H1 (cell line): ENCODE measurements at regions of chr7 and their contacts with region 1.

Region 1: DNA sequence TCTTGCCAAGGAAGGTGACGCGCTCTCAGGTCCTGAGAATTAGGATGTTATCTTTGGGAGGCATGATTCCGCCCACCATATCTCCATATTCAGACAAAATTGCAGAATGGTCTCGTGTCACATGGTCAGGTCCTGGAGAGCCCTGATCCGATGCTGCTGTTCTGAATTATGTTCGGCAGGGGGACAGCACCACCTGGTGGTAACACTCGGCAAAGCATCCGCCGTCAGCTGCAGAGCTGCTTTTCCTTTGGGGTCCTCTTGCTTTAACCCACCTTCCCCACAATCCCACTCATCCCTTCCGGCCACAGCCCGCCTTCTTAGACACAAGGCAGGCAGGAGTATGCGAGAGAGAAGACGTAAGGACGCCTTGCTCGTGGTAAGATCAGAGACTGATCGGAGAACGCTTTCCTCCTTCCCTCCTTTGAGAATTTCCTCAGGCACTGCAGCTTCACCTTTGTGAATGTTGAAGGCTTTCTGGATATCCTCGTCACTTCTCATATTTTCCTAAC is 327.8 kb upstream of the C7orf33 start:
- DNase-seq: peak; percentile 64 to 98
- H3K4me3 ChIP-seq: no peak overlapping the region
- H3K27ac ChIP-seq: no peak overlapping the region
- H3K4me1 ChIP-seq: peaks cover 0 to 3% (median 0%) of the 10 kb centered on the region in 4 experiments; a peak in 1 of 7 replicates
- H3K27me3 ChIP-seq: no peaks in the 10 kb centered on the region
- CTCF ChIP-seq: peak; percentile 85 to 97 (median 97)
- EP300 ChIP-seq: no peak
- POLR2A ChIP-seq: no peak
- RAD21 ChIP-seq: peak; percentile 93

Region 2: GRCh38 chr7:148276314-148277041 is 13.7 kb after region 1 on chr7:
- CTCF ChIA-PET with region 1: interaction called, 28 read pairs
- POLR2A ChIA-PET with region 1: no interaction called
- DNase-seq: no peak
- H3K4me3 ChIP-seq: no peak overlapping the region
- H3K27ac ChIP-seq: no peak overlapping the region
- H3K4me1 ChIP-seq: no peaks in the 10 kb centered on the region
- H3K27me3 ChIP-seq: no peaks in the 10 kb centered on the region; a peak in 1 of 7 replicates
- CTCF ChIP-seq: no peak
- EP300 ChIP-seq: no peak
- POLR2A ChIP-seq: no peak
- RAD21 ChIP-seq: no peak

Region 3: GRCh38 chr7:148282297-148282696 is 19.5 kb after region 1 on chr7:
- CTCF ChIA-PET with region 1: interaction called, 28 read pairs
- POLR2A ChIA-PET with region 1: no interaction called
- DNase-seq: no peak
- H3K4me3 ChIP-seq: no peak overlapping the region
- H3K27ac ChIP-seq: no peak overlapping the region
- H3K4me1 ChIP-seq: no peaks in the 10 kb centered on the region
- H3K27me3 ChIP-seq: no peaks in the 10 kb centered on the region
- CTCF ChIP-seq: no peak
- EP300 ChIP-seq: no peak
- POLR2A ChIP-seq: no peak
- RAD21 ChIP-seq: no peak

Region 4: DNA sequence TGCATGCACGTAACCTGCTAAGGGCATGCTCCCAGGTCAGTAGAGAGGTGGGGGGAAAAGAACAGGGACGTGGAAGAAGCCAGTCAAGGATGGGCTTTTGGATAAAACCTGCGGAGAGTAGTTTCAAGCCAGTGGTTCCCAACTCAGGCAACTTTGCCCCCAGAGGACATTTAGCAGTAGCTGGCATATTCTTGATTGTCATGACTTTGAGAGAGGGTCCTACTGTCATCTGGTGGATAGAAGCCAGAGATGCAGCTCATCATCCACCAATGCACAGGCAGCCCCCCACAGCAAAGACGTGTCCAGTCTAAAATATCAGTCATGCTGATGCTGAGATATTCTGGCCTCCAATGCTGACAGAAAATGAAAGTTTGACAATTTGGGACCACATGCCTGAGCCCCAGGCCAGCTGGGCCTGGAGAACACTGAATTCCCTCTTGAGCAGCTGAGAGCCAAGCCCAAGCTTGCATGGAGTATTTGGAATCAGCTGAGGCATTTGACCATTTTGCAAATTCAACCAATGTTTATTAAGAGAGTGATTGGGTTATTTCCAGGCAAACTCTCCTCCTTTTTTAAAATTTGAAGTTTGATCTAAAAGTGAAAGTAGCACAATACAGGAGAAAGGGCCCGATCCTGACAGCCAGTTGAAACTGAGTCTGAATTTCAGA is 217.8 kb after region 1 on chr7:
- CTCF ChIA-PET with region 1: interaction called, 22 read pairs
- POLR2A ChIA-PET with region 1: no interaction called
- DNase-seq: no peak
- H3K4me3 ChIP-seq: no peak overlapping the region
- H3K27ac ChIP-seq: no peak overlapping the region
- H3K4me1 ChIP-seq: peaks cover 0 to 8% (median under 1%) of the 10 kb centered on the region in 4 experiments; a peak in 3 of 7 replicates
- H3K27me3 ChIP-seq: no peaks in the 10 kb centered on the region
- CTCF ChIP-seq: peak; percentile 22 to 88 (median 60)
- EP300 ChIP-seq: no peak
- POLR2A ChIP-seq: no peak
- RAD21 ChIP-seq: peak; percentile 72 to 78

Region 5: DNA sequence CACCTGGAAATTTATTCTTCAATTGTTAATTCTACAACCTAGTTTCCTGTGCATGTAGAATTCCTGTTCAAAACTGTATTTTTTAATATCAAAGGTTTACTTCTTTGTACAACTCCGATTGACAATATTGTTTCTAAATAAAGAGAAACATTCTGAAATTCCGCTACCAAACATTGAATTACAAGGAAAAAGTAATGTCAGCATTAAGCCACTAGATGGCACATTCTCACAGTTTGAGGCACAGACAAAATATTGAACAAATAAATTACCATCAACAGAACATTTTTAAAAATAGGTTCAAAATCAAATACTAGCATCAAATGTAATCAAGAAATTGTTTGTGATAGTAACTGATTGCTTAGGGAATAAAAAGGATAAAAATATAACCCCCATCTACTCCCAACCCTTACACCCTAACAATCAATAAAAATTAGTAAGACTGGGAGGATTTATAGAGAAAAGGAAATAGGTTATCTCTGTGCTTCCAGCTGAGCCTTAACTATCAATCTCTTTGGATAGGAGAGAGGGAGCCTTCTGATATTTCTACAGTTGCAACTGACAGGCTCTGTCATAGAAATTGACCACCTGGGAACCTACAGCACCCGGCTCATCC is 241.2 kb after region 1 on chr7:
- CTCF ChIA-PET with region 1: interaction called, 13 read pairs
- POLR2A ChIA-PET with region 1: no interaction called
- DNase-seq: no peak
- H3K4me3 ChIP-seq: no peak overlapping the region
- H3K27ac ChIP-seq: no peak overlapping the region
- H3K4me1 ChIP-seq: peaks cover 9 to 21% (median 14%) of the 10 kb centered on the region in 4 experiments
- H3K27me3 ChIP-seq: no peaks in the 10 kb centered on the region
- CTCF ChIP-seq: peak in 2 of 3 experiments; percentile 45 to 58; a peak in 2 of 4 replicates
- EP300 ChIP-seq: no peak
- POLR2A ChIP-seq: no peak
- RAD21 ChIP-seq: peak; percentile 62 to 76

Region 6: DNA sequence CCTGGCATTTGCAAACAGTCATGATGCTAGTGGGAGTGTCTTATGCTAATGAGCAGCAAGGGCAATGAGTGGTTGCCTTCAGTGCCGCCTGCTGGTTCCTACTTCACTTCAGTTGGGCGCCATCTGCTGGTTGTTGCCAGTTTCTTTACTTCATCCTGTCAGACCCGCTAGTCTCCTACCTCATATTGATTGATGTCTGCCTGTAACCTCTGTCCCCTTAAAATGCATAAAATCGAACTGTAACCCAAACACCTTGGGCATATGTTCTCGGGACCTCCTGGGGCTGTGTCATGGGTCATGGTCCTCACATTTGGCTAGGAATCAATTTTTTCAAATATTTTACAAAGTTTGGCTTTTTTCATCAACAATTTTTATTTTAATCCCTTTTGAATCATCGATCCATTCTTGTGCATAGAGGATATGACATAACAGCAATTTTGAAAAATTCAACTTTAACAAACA is 265.0 kb after region 1 on chr7:
- CTCF ChIA-PET with region 1: interaction called, 14 read pairs
- POLR2A ChIA-PET with region 1: no interaction called
- DNase-seq: peak; percentile 65 to 88
- H3K4me3 ChIP-seq: no peak overlapping the region
- H3K27ac ChIP-seq: no peak overlapping the region
- H3K4me1 ChIP-seq: peaks cover 0 to 3% (median under 1%) of the 10 kb centered on the region in 4 experiments; a peak in 1 of 7 replicates
- H3K27me3 ChIP-seq: no peaks in the 10 kb centered on the region
- CTCF ChIP-seq: peak; percentile 74 to 99 (median 91)
- EP300 ChIP-seq: no peak
- POLR2A ChIP-seq: no peak
- RAD21 ChIP-seq: peak; percentile 76 to 79